ENCODE measurements at regions of chr4 and their contacts with region 1.

Region 1: DNA sequence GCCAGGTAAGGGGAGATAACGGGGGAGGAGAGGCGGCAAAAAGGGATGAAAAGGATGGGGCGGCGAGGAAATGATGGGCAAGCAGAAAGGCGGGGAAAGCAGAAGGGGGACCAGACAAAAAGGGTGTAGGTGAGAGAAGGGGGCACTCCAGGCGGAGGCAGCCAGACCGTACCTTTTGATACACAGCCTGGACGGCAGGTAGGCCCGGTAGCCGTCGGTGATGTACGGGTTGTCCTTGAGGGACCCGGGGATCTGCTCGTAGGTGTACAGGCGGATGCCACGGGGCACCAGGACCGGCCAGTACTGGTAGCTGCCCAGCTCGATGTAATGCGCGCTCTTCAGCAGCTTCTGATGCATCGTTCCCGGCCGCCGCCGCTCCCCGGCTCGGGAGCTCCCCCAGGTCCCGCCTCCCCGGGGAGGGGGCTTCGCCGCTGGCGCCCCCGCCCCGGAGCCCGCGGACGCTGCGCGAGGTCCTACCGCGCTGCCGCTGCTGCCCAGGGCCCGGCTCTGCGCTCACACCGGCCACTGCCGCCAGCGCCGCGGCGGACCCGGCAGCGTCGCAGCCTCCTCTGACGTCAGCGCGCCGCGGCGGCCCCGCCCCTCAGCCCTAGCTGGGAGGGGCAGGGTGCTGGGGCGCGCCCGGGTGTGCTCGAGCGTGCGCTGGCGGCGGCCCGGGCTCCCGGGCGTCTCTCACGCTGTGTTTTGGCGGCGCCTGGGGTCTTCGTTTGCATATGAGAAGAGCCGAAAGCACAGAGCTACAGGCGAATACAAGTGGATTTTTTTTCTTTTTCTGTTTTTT is at the start of gene PAQR3:
- DNase-seq: peak; percentile 23
- H3K4me3 ChIP-seq: peak within 1 kb of the TSS; percentile 92
- H3K27ac ChIP-seq: no peak within 1 kb of the TSS
- H3K27me3 ChIP-seq: no peaks in the 10 kb centered on the region
- CTCF ChIP-seq: no peak
- polyA plus RNA-seq, gene PAQR3: 22.9 and 35.7 TPM in 2 replicates

Region 2: DNA sequence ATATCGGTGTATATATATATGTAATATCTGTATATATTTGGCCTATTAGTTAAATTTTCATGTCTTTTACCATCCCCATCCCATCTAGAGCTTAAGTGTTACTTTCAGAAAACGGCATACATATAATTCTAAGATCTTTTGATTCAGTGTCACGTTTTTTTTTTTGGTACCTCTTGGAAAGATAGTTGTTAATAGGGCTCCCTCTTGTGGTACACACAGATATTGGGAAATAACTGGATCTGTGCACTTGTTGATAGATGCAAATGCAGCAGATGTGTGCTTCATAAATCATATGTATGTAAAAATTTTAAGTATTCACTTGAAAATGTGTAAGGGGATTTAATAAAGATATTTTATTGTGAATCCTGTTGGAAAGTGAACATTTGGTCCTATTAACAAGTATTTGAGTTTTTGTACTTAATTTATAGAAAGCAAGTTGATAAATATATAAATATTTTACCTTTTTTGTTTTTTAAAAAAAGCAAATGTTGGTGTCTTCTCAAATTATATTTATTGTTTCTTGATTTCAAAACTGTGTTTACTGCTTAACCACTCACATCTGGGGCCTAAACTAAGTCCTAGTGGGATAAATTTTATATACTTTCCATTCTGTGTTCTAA is 74.6 kb before region 1 on chr4:
- CTCF ChIA-PET with region 1: no interaction called
- POLR2A ChIA-PET with region 1: no interaction called
- DNase-seq: peak; percentile 63
- H3K4me3 ChIP-seq: no peak overlapping the region
- H3K27ac ChIP-seq: no peak overlapping the region
- H3K27me3 ChIP-seq: no peaks in the 10 kb centered on the region
- CTCF ChIP-seq: peak; percentile 68

Region 3: DNA sequence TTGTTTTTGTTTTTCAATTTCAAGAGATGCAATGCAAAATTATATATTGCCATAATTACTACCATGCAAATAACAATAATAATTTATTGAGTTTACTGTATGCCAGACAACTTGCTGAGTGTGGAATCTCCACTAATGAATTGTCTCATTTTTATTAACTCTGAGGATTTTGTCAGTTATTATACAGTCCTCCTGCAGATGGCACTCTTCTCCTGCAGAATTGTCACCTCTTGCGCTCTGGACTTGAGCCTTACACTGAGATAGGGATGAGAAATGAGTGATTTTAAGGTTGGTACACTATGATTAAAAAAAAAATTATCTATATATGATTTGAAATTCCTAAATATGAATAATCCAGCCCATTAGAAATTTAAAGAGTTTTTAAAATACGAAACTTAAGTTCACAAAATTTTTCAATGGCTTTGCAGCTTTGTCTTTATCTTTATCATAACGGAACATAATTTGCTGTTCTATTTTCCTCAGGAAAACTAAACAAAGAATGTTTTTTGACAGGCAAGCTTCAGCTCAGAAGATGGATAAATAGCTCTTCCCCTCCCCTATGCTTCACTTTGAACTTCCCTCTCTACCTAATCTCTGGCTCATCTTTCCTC is 12.9 kb after region 1 on chr4:
- CTCF ChIA-PET with region 1: interaction called, 21 read pairs
- POLR2A ChIA-PET with region 1: no interaction called
- DNase-seq: no peak
- H3K4me3 ChIP-seq: no peak overlapping the region
- H3K27ac ChIP-seq: no peak overlapping the region
- H3K27me3 ChIP-seq: no peaks in the 10 kb centered on the region
- CTCF ChIP-seq: peak; percentile 78